ENCODE measurements at regions of chr22 and their contacts with region 1.

Region 1: GRCh38 chr22:28373831-28374230 is 305.8 kb downstream of the TTC28 start:
- DNase-seq: no peak
- ATAC-seq: peak in 2 of 4 donors; percentile 42 to 43
- H3K4me3 ChIP-seq: no peak overlapping the region
- H3K27ac ChIP-seq: peak overlapping the region in 1 of 12 donors; percentile 18
- H3K4me1 ChIP-seq: peaks cover 0 to 44% (median 27%) of the 10 kb centered on the region in 12 donors
- H3K27me3 ChIP-seq: no peaks in the 10 kb centered on the region
- CTCF ChIP-seq: no peak
- POLR2A ChIP-seq: no peak

Region 2: GRCh38 chr22:28297504-28297903 is 76.3 kb before region 1 on chr22:
- intact Hi-C with region 1: loop called in 1 of 10 experiments (anchors 5 kb)
- DNase-seq: no peak
- ATAC-seq: no peak
- H3K4me3 ChIP-seq: no peak overlapping the region
- H3K27ac ChIP-seq: peak overlapping the region in 1 of 12 donors; percentile 25
- H3K4me1 ChIP-seq: peaks cover 0 to 36% (median 21%) of the 10 kb centered on the region in 12 donors
- H3K27me3 ChIP-seq: no peaks in the 10 kb centered on the region
- CTCF ChIP-seq: no peak
- POLR2A ChIP-seq: no peak

Region 3: DNA sequence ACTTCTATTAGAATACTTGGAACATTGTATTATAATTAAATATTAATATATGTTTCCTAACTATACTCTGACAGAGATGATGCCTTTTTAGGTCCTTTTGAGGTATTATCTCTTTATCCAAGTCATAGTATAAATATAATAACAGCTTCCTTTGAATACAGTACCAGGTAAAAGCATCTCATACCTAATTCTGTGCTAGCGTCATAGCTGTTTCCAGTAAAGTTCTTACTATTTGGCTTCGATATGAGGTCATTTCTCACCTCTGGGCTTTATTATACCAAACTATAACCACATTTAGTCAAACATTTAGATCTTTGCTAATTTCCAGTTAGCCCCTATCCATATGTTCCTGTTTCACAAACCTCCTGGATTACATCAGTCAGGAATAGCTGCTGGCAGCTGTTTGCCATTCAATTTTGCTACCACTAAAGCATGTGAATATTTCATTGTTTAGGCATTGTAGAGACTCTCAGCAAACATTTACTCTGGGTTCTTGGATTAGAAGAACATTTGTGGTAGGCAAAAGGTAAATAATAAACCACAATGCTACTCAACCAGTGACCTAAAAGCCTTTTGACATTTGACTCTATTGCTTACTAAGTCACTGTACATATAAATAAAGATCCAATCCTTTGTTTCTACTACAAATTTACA is 50.7 kb after region 1 on chr22:
- intact Hi-C with region 1: loop called in 1 of 10 experiments (anchors 10 kb)
- DNase-seq: no peak
- ATAC-seq: no peak
- H3K4me3 ChIP-seq: no peak overlapping the region
- H3K27ac ChIP-seq: no peak overlapping the region
- H3K4me1 ChIP-seq: peaks cover 2 to 26% (median 9%) of the 10 kb centered on the region in 12 donors
- H3K27me3 ChIP-seq: no peaks in the 10 kb centered on the region
- CTCF ChIP-seq: no peak
- POLR2A ChIP-seq: no peak